ENCODE measurements at regions of chr11 and their contacts with region 1.

Region 1: GRCh38 chr11:133821776-133822175 is 23.5 kb downstream of the SPATA19 start:
- DNase-seq: peak; percentile 66 to 81
- H3K4me3 ChIP-seq: no peak overlapping the region
- H3K27ac ChIP-seq: no peak overlapping the region
- H3K4me1 ChIP-seq: peaks cover 0 to 2% (median 0%) of the 10 kb centered on the region in 4 experiments; a peak in 1 of 7 replicates
- H3K27me3 ChIP-seq: no peaks in the 10 kb centered on the region; a peak in 1 of 7 replicates
- CTCF ChIP-seq: peak; percentile 84 to 95 (median 90)
- EP300 ChIP-seq: no peak
- POLR2A ChIP-seq: no peak
- RAD21 ChIP-seq: peak; percentile 94 to 95

Region 2: DNA sequence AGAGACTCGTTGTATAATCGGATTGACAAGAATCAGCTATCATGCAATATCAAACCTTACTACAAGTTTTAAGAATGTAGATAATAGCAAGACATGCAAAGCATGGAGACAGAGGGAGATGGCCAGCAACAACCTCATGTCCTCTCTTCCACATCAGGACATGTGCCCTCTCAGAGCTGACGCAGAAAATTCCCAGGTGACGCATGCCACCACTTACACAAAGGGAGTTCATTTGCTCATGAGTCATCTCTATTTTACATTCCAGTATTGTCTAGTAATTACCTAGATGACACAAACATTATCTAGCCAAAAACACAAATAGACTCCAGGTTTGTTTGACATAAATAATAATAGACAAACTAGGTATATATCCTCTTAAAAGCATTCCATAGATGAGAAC is 251.4 kb before region 1 on chr11:
- CTCF ChIA-PET with region 1: interaction called, 12 read pairs
- POLR2A ChIA-PET with region 1: no interaction called
- DNase-seq: no peak
- H3K4me3 ChIP-seq: no peak overlapping the region
- H3K27ac ChIP-seq: no peak overlapping the region
- H3K4me1 ChIP-seq: no peaks in the 10 kb centered on the region
- H3K27me3 ChIP-seq: no peaks in the 10 kb centered on the region; a peak in 1 of 7 replicates
- CTCF ChIP-seq: no peak
- EP300 ChIP-seq: no peak
- POLR2A ChIP-seq: no peak
- RAD21 ChIP-seq: no peak

Region 3: DNA sequence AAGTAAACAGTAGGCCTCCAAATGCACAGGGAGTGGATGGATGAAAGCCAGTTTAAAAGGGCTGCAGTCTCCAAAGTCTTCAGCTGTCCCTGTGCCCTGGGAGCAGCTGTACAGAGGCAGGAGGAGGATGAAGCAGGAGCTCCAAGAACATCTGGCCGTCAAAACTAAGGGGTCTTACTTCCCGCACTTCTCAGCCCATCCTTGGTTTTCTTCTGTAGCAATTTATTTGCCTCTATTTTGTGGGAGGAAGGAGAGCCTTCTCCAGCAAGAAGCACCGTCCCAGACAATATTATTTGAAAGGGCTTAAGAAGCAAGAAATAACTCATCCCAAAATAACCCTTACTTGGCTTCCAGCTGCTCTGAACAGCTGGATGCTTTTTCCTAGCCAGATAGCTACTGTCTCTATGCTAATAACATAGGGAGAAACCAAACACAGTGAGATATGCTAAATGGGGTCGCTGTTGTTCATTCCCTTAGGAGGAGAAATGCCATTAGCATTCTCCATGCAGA is 109.7 kb before region 1 on chr11:
- CTCF ChIA-PET with region 1: interaction called, 10 read pairs
- POLR2A ChIA-PET with region 1: no interaction called
- DNase-seq: peak in 1 of 2 experiments; percentile 39
- H3K4me3 ChIP-seq: peak overlapping the region in 1 of 4 experiments; percentile 34; a peak in 2 of 8 replicates
- H3K27ac ChIP-seq: no peak overlapping the region
- H3K4me1 ChIP-seq: peaks cover 0 to 38% (median 10%) of the 10 kb centered on the region in 4 experiments; a peak in 6 of 7 replicates
- H3K27me3 ChIP-seq: peaks cover 0 to 12% (median 2%) of the 10 kb centered on the region in 4 experiments; a peak in 4 of 7 replicates
- CTCF ChIP-seq: no peak
- EP300 ChIP-seq: no peak
- POLR2A ChIP-seq: no peak
- RAD21 ChIP-seq: no peak

Region 4: GRCh38 chr11:133732109-133732674 is 89.6 kb before region 1 on chr11:
- CTCF ChIA-PET with region 1: no interaction called
- POLR2A ChIA-PET with region 1: no interaction called
- DNase-seq: no peak
- H3K4me3 ChIP-seq: no peak overlapping the region
- H3K27ac ChIP-seq: no peak overlapping the region
- H3K4me1 ChIP-seq: peaks cover 3 to 12% (median 4%) of the 10 kb centered on the region in 4 experiments
- H3K27me3 ChIP-seq: no peaks in the 10 kb centered on the region; a peak in 1 of 7 replicates
- CTCF ChIP-seq: no peak
- EP300 ChIP-seq: no peak
- POLR2A ChIP-seq: no peak
- RAD21 ChIP-seq: peak in 1 of 2 experiments; percentile 17; a peak in 1 of 4 replicates

Region 5: GRCh38 chr11:133834682-133835592 is 13.2 kb after region 1 on chr11:
- CTCF ChIA-PET with region 1: interaction called, 27 read pairs
- POLR2A ChIA-PET with region 1: no interaction called
- DNase-seq: peak; percentile 68 to 78
- H3K4me3 ChIP-seq: no peak overlapping the region
- H3K27ac ChIP-seq: no peak overlapping the region
- H3K4me1 ChIP-seq: peaks cover 0 to 2% (median 0%) of the 10 kb centered on the region in 4 experiments; a peak in 3 of 7 replicates
- H3K27me3 ChIP-seq: no peaks in the 10 kb centered on the region
- CTCF ChIP-seq: peak; percentile 58 to 93 (median 89)
- EP300 ChIP-seq: no peak
- POLR2A ChIP-seq: no peak
- RAD21 ChIP-seq: peak; percentile 97

Region 6: DNA sequence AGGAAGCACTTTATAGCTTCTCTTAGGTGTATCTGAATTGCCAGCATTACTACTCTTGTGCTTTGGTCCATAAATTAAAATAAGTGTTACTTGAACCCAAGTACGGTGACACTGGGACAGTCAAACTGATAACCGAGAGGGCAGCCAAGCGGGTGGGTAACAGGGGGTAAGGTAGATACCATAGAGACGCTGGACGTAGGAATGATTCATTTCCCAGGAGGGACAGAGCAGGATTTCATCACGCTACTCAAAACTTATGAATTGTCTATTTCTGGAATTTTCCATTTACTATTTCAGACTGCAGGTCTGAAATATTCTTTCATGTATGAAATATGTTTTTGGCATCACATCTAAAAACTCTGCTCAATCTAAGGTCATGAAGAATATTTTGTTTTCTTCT is 38.4 kb after region 1 on chr11:
- CTCF ChIA-PET with region 1: no interaction called
- POLR2A ChIA-PET with region 1: no interaction called
- DNase-seq: no peak
- H3K4me3 ChIP-seq: no peak overlapping the region
- H3K27ac ChIP-seq: no peak overlapping the region
- H3K4me1 ChIP-seq: peaks cover 0 to under 1% (median 0%) of the 10 kb centered on the region in 4 experiments; a peak in 1 of 7 replicates
- H3K27me3 ChIP-seq: no peaks in the 10 kb centered on the region
- CTCF ChIP-seq: no peak
- EP300 ChIP-seq: no peak
- POLR2A ChIP-seq: no peak
- RAD21 ChIP-seq: no peak

Measured in H1 (cell line).